Right ventricle myocardium inferior (tissue), 1 donor: ENCODE measurements at regions of chr6 and their contacts with region 1.

Region 1: GRCh38 chr6:1381481-1382330 is 7.7 kb upstream of the FOXF2 start:
- DNase-seq: peak; percentile 76
- ATAC-seq: peak; percentile 83

Region 2: DNA sequence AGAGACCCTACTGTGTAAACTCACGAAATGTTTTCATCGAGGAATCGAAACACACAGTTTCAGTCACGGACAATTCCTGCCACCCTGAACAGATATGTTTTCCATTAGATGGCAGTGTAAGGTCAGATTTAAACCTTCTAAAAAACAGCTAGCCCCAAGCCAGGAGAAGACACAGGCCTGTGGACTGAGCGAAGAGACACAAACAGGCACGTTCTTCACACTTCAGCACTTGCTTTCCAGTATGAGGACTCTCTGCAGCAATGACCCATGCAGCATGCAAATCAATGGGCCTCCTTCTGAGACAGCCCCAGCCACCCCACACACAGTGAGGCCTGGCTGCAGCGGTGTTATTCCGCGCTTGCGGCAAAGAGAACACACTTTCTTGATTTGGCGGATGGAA is 756.7 kb before region 1 on chr6:
- intact Hi-C with region 1: loop called (anchors 10 kb)
- DNase-seq: no peak
- ATAC-seq: peak; percentile 72

Region 3: GRCh38 chr6:722077-722524 is 659.6 kb before region 1 on chr6:
- intact Hi-C with region 1: loop called (anchors 10 kb)
- DNase-seq: peak; percentile 76
- ATAC-seq: peak; percentile 48

Region 4: GRCh38 chr6:797479-798077 is 584.1 kb before region 1 on chr6:
- intact Hi-C with region 1: loop called (anchors 2 kb)
- DNase-seq: no peak
- ATAC-seq: no peak

Region 5: DNA sequence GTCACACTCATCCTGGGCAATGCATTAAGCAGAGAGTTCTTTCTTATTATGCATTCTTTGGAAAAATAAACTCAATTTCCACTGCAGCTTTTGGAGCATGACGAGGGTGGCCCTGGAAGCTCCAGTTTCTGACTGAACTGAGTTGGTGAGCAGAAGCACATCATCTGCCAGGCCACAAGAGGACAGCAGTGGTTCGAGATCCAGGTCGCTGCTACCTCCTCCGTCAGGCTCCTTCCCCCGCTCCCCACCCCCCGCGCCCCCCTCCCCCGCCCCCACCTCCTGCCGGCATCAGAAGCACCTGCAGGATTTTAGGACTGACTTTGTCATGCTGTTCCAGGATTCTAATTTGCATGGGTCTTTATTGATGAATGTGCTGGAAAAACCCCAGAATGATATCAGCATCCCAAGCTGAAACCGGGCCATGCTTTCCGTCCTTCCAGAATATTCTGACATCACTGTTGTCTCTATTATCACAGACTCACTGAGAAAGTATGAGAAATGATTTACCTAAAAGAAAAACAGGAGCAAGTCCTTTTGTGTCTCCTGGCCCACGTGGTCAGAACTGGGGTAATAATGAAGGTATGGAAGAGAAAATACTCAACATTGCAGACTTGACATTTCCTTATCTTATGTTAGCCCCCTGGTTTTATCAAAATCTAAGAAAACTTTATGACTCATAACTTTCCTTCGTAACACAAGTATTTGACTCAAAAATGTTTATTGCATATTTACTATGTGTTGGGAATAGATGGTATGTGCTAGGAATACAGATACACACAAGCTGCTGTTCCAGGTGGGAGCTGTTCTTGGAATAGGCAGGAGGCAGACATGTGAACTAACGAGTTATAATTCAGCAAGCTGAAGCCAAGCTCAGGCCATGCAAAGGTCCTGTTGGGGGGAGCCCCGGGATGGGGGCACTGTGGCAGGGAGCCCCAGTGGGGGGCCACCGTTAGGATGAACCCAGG is 468.6 kb before region 1 on chr6:
- intact Hi-C with region 1: loop called (anchors 10 kb)
- DNase-seq: no peak
- ATAC-seq: peak; percentile 39

Region 6: DNA sequence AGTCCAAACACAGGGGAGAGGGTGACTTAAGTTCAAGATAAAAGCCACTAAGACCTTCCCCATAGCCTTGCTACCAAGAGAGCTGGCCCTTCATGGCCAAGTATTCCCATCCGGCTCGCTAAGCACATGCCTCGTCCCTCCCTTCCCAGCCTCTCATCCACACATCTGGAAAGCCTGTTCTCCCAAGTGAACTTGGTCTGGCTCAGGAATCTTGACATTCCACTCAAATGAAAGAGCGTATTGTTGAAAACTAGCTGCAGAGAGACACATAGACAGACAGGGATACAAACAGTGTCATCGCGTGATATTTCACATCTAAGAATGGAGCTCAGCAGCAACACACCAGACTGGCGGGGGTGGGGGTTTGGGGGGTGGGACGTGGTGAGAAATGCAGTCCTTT is 252.6 kb before region 1 on chr6:
- intact Hi-C with region 1: loop called (anchors 10 kb)
- DNase-seq: no peak
- ATAC-seq: peak; percentile 70